Heart right ventricle (tissue), 16 donors: ENCODE measurements at regions of chr4 and their contacts with region 1.

Region 1: DNA sequence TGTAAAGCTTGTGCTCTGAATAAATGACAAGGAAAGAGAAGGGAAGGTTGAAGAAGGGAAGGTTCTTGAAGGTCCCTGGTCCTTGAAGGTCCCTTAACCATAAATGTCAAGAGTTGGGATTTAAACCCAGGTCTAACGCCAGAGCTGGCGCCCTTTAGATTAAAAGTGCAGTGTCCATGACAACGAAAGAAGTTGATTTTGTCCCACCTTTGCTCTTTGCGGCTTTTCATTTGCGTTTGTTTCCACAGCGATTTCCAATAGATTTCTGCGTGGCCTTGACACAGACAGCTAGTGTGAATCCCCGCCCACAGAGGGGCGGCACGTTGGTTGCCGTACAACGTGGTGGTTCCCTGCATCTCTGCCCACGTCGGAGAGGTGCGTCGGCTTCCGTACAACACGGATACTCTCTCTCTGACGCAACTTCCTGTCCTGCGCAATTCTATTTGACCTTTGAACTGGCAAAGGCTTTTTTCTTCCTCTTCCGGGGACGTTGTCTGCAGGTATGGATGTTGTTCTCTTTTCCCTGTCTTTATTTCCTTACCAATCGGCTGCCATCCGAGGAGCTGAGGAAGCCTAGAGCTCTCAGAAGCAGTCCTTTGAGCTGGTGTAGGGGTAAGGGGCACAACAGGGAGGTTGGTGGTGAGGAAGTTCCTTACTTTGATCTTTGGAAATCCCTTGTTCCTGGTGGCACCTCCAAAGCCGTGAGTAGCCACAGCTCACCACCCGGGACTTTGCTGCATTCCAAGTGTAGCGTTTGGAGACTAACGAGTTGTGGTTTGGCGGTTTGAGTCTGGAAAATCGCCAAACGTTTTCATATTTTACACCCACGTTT is at the start of gene RPL34:
- DNase-seq: peak; percentile 94 to 98
- ATAC-seq: peak; percentile 100
- H3K4me3 ChIP-seq: peak within 1 kb of the TSS; percentile 49 to 86 (median 76)
- H3K27ac ChIP-seq: peak within 1 kb of the TSS in 9 of 10 donors; percentile 66 to 92 (median 82)
- H3K4me1 ChIP-seq: peaks cover 0 to 54% (median 39%) of the 10 kb centered on the region in 9 donors
- H3K27me3 ChIP-seq: no peaks in the 10 kb centered on the region
- CTCF ChIP-seq: no peak
- total RNA-seq, gene RPL34: 612 to 800 (median 663) TPM

Region 2: DNA sequence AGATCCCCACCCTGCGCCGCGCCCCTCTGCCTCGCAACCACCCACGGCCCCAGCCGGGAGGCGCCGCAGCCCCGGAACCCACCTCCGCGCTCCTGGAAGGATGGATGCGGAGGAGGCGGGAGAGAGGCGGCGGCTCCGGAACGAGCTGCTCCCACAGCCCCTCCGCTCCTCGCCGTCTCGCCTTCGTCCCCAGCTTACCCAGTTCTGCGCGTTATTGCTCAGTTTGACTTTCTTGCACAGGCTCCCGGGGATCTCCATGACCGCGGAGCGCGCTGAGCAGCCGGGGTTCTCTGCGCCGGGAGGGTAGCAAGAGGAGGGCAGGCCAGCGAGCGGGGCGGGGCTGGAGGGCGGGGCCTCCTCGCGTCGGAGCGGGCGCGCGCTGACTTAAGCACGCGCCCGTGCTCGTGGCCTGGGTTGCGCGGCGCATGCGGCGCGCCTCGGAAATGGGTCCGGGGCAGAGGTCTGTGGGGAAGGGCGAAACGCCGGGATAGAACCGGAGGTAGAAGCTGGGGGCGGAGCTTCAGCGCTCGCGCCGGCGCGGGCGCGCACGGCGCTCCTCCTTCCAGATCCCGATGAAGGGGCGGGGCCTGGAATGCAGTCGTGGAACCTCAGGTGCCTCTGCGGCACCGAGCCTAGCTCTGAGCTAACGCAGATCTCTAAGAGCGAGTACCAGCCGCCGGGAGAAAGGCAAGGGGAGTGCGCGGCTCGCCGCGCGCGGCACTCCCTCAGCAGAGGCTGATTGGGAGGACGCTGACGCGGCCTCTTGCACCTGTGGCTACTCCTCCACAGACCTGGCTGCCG is 900.2 kb before region 1 on chr4 and contains the start of gene PAPSS1:
- intact Hi-C with region 1: loop called in 1 of 10 experiments (anchors 10 kb)
- DNase-seq: peak; percentile 96 to 97
- ATAC-seq: peak; percentile 98 to 100 (median 99)
- H3K4me3 ChIP-seq: peak within 1 kb of the TSS; percentile 53 to 100 (median 92)
- H3K27ac ChIP-seq: peak within 1 kb of the TSS in 9 of 10 donors; percentile 73 to 90 (median 84)
- H3K4me1 ChIP-seq: peaks cover 0 to 23% (median 14%) of the 10 kb centered on the region in 9 donors
- H3K27me3 ChIP-seq: no peaks in the 10 kb centered on the region
- CTCF ChIP-seq: no peak
- total RNA-seq, gene PAPSS1: 8.5 to 18.9 (median 10.7) TPM

Region 3: DNA sequence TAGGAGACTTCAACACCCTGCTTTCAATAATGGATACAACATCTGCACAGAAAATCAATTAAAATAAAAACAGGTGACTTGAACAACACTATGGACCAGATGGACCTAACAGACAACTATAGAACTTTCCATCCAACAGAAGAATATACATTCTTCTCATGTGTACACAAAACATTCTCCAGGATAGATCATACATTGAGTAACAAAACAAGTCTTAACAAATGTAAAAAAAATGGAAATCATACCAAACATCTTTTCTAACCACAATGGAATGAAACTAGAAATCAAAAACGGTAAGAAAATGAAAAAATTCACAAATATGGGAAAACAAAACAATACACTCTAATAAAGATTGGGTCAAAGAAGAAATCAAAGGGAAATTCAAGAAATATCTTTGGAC is 664.3 kb before region 1 on chr4:
- intact Hi-C with region 1: no loop called
- DNase-seq: no peak
- ATAC-seq: no peak
- H3K4me3 ChIP-seq: no peak overlapping the region
- H3K27ac ChIP-seq: no peak overlapping the region
- H3K4me1 ChIP-seq: no peaks in the 10 kb centered on the region
- H3K27me3 ChIP-seq: no peaks in the 10 kb centered on the region
- CTCF ChIP-seq: no peak

Region 4: GRCh38 chr4:108650212-108651013 is 30.1 kb after region 1 on chr4 and contains the start of gene OSTC:
- intact Hi-C with region 1: loop called in 2 of 10 experiments (anchors 1 to 2 kb)
- DNase-seq: peak; percentile 94 to 97
- ATAC-seq: peak; percentile 96 to 99 (median 98)
- H3K4me3 ChIP-seq: peak within 1 kb of the TSS; percentile 67 to 94 (median 79)
- H3K27ac ChIP-seq: peak within 1 kb of the TSS; percentile 51 to 93 (median 86)
- H3K4me1 ChIP-seq: peaks cover 0 to 31% (median 19%) of the 10 kb centered on the region in 9 donors
- H3K27me3 ChIP-seq: no peaks in the 10 kb centered on the region
- CTCF ChIP-seq: peak in 5 of 9 donors; percentile 35 to 60 (median 46)
- total RNA-seq, gene OSTC: 21.8 to 47.7 (median 25.8) TPM